PC-9 (cell line): ENCODE measurements at regions of chr1 and their contacts with region 1.

Region 1: GRCh38 chr1:200392625-200393185 is 17.1 kb downstream of the ZNF281 start:
- DNase-seq: no peak
- H3K4me3 ChIP-seq: no peak overlapping the region
- H3K27ac ChIP-seq: no peak overlapping the region
- H3K4me1 ChIP-seq: no peaks in the 10 kb centered on the region
- H3K27me3 ChIP-seq: no peaks in the 10 kb centered on the region
- CTCF ChIP-seq: no peak

Region 2: GRCh38 chr1:200405260-200405659 is 12.6 kb after region 1 on chr1:
- CTCF ChIA-PET with region 1: no interaction called
- POLR2A ChIA-PET with region 1: no interaction called
- intact Hi-C with region 1: no loop called
- DNase-seq: no peak
- H3K4me3 ChIP-seq: peak overlapping the region; percentile 77; the same call in 1 of the 2 replicates
- H3K27ac ChIP-seq: no peak overlapping the region
- H3K4me1 ChIP-seq: peaks cover 44% of the 10 kb centered on the region
- H3K27me3 ChIP-seq: no peaks in the 10 kb centered on the region
- CTCF ChIP-seq: no peak

Region 3: GRCh38 chr1:200457810-200458209 is 65.1 kb after region 1 on chr1:
- CTCF ChIA-PET with region 1: no interaction called
- POLR2A ChIA-PET with region 1: interaction called, 13 read pairs
- intact Hi-C with region 1: no loop called
- DNase-seq: no peak
- H3K4me3 ChIP-seq: no peak overlapping the region
- H3K27ac ChIP-seq: no peak overlapping the region
- H3K4me1 ChIP-seq: peaks cover 10% of the 10 kb centered on the region; the same call in 1 of the 2 replicates
- H3K27me3 ChIP-seq: no peaks in the 10 kb centered on the region
- CTCF ChIP-seq: no peak